ENCODE measurements at regions of chr10 and their contacts with region 1.

Region 1: GRCh38 chr10:100878291-100878910 is 34.4 kb upstream of the SLF2 start:
- DNase-seq: peak; percentile 90
- H3K27ac ChIP-seq: no peak overlapping the region
- CTCF ChIP-seq: peak; percentile 71

Region 2: DNA sequence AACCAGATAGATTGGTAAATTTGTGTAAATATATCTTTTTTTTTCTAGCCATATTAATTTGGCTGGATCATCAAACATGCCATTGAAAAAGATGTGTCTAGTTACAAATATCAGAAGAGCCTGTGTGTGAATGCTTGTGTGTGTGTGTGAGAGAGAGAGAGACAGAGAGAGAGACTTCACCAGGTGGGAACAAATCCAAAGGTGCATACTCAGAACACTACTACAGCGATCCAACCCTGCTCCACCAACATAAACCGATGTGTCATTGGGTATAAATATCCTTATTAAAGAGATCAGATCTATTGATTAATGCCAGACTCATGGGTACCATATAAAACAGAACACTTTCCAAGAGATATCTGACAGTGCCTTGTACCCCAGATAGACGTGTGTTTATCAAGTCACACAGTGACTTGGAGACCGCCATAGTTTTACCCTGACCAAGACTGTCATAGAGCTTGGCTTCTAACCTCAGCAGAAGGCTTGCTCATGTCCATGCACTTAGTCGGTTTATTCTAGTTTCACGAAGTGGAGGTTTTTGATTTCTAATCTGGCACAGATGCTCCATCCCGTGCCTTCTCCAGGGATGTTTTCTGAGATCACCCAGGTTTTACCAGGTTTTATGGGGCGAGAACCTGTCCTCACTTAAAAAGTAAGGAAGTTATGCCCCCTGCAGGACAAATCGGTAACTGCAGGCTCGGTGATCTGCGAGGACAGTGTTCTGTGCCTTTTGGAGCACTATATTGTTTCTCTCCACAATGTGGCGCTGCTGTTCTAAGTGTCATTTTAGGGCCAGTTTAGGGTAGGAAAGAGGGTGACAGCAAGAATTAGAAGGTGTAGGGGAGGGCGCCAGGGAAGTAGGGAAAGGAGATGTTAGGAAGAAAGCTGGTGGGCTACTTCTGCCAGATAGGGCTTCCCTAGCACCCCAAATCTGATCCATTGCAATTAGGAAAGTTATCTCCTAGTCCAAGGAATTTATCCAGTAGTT is 444.9 kb before region 1 on chr10:
- CTCF ChIA-PET with region 1: interaction called, 20 read pairs
- POLR2A ChIA-PET with region 1: no interaction called
- DNase-seq: peak; percentile 88
- H3K27ac ChIP-seq: no peak overlapping the region
- CTCF ChIP-seq: peak; percentile 98

Region 3: DNA sequence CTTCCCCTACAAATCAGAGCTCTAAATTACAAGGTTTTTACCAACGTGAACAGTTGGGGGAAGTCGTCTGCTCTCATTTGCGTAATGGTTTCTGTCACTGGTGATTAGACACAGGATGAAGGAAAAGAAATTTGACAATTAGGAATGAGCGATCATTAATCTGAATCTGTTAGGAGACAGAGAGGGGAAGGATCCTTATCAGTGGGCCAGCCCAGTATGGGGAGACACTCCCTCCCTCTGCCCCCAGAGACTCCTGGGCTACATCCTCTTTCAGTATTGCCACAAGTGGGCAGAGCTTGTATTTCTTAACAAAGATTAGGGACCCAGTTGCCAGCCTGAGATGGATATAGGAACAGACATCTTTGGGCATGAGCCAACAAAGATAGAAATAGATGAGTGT is 327.2 kb before region 1 on chr10:
- CTCF ChIA-PET with region 1: interaction called, 10 read pairs
- POLR2A ChIA-PET with region 1: no interaction called
- DNase-seq: no peak
- H3K27ac ChIP-seq: no peak overlapping the region
- CTCF ChIP-seq: no peak

Region 4: GRCh38 chr10:100562008-100562711 is 316.2 kb before region 1 on chr10:
- CTCF ChIA-PET with region 1: interaction called, 37 read pairs
- POLR2A ChIA-PET with region 1: no interaction called
- DNase-seq: peak; percentile 92
- H3K27ac ChIP-seq: no peak overlapping the region
- CTCF ChIP-seq: peak; percentile 95

Region 5: GRCh38 chr10:100743626-100744135 is 134.7 kb before region 1 on chr10:
- CTCF ChIA-PET with region 1: interaction called, 23 read pairs
- POLR2A ChIA-PET with region 1: no interaction called
- DNase-seq: peak; percentile 54
- H3K27ac ChIP-seq: no peak overlapping the region
- CTCF ChIP-seq: peak; percentile 59

Region 6: GRCh38 chr10:100776671-100777070 is 101.7 kb before region 1 on chr10:
- CTCF ChIA-PET with region 1: interaction called, 10 read pairs
- POLR2A ChIA-PET with region 1: no interaction called
- DNase-seq: no peak
- H3K27ac ChIP-seq: no peak overlapping the region
- CTCF ChIP-seq: no peak

Region 7: DNA sequence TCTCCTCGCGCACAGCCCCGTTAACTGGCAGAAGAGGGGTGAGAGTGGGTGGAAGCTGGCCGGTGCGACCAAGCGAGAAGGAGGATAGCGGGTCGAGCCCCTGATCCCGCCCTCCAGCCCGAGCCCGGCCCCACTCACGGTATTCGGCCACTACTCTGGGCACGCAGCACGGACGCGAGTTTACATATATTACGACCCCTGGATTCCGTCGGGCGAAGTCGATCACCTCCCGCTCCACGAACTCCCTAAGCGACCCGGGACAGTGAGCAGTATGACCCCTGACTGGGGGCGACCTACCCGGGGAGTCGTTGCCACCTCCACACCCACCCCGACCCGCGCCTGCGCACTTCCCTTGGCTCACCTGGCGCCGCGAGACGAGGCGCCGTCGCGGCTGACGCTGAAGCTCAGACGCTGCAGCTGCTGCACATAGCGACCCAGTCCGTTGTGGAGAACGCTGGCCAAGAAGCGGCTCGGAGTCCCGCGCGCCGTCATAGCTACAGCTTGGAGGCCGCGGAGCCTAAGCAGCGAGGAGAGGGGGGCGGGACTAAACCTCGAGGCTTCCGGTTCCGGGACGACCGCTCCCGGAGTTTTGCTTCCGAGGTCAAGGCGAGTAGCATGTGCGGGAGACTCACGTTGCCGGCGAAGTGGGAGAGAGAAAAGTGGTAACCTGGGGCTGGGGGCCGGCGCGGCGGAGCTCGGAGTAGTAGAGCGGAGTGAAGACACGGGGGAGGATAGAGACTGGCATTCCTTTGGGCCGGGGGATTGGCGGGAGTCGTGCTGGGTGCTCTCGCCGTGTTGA is 108.8 kb after region 1 on chr10 and contains the starts of genes MRPL43 and TWNK:
- CTCF ChIA-PET with region 1: no interaction called
- POLR2A ChIA-PET with region 1: no interaction called
- DNase-seq: peak; percentile 91
- H3K27ac ChIP-seq: peak within 1 kb of the TSS; percentile 88
- CTCF ChIP-seq: no peak

Measured in RWPE1 (cell line).